Posterior cingulate gyrus (tissue), 11 donors: ENCODE measurements at regions of chr4 and their contacts with region 1.

Region 1: GRCh38 chr4:184474263-184475095 is at the start of gene IRF2:
- DNase-seq: peak; percentile 88 to 99 (median 94)

Region 2: GRCh38 chr4:184263910-184264732 is 210.4 kb before region 1 on chr4:
- intact Hi-C with region 1: loop called (anchors 2 kb)
- DNase-seq: peak; percentile 83 to 98 (median 96)

Region 3: DNA sequence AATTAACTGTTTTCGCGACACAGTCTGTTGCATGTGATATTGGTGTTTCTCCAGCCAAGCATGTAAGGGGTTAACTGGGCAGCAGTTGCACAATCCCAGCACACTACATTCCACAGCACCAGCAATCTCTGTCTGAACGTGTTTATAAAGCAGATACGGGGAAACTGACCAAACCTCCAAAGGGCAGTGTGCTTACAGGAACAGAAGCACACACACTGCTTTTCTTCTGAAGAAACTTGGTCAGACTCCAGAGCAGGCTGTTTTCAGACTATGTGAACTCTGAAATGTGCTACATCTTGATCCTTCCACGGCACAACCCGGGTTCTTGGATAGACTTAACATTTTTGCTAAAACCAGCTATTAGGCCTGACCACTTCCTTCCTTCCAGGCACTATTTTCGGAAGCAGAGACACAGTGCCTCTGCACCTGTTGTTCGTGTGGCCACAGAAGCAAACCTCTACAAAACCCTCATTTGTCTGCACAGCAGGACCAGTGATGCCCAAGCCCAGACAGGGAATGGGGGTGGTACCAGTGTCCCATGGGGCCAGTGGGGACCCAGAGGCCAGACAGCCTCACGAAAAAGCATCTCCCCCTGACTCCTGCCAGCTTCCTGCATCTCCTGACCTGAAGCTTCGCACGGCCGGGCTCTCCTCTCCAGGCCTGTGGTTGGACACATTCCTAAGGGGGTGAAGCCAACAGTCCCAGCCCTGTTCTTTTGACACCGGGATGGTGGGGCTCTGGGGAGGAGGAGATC is 90.2 kb before region 1 on chr4:
- intact Hi-C with region 1: loop called (anchors 10 kb)
- DNase-seq: no peak

Region 4: GRCh38 chr4:184514121-184514988 is 39.9 kb after region 1 on chr4:
- intact Hi-C with region 1: loop called (anchors 5 kb)
- DNase-seq: peak; percentile 53 to 96 (median 68)

Region 5: GRCh38 chr4:184649026-184649970 is 174.8 kb after region 1 on chr4 and contains the starts of genes CASP3 and PRIMPOL:
- intact Hi-C with region 1: loop called (anchors 5 kb)
- DNase-seq: peak; percentile 94 to 99 (median 96)

Region 6: GRCh38 chr4:184815046-184815877 is 340.8 kb after region 1 on chr4:
- intact Hi-C with region 1: no loop called
- DNase-seq: peak in 9 of 10 donors; percentile 61 to 95 (median 72)